ENCODE measurements at regions of chr19 and their contacts with region 1.

Region 1: GRCh38 chr19:39480337-39481228 is at the start of gene TIMM50:
- DNase-seq: peak; percentile 93 to 98 (median 95)
- ATAC-seq: peak; percentile 100
- H3K4me3 ChIP-seq: peak within 1 kb of the TSS; percentile 74
- H3K4me3 Mint-ChIP-seq: peak within 1 kb of the TSS; percentile 86 to 97 (median 92)
- H3K27ac ChIP-seq: peak within 1 kb of the TSS; percentile 86
- H3K27ac Mint-ChIP-seq: peak within 1 kb of the TSS; percentile 80 to 97 (median 93)
- H3K4me1 ChIP-seq: peaks cover 10 to 11% of the 10 kb centered on the region in 2 donors
- H3K4me1 Mint-ChIP-seq: peaks cover 14 to 32% (median 25%) of the 10 kb centered on the region in 7 donors
- H3K27me3 ChIP-seq: no peaks in the 10 kb centered on the region
- H3K27me3 Mint-ChIP-seq: no peaks in the 10 kb centered on the region
- total RNA-seq, gene TIMM50: 43.5 to 70.0 (median 50.0) TPM

Region 2: GRCh38 chr19:39502640-39503417 is 22.2 kb after region 1 on chr19:
- CTCF ChIA-PET with region 1: no interaction called
- POLR2A ChIA-PET with region 1: no interaction called
- intact Hi-C with region 1: loop called in 1 of 2 experiments (anchors 2 kb)
- DNase-seq: peak; percentile 67 to 88 (median 78)
- ATAC-seq: peak; percentile 94
- H3K4me3 ChIP-seq: no peak overlapping the region
- H3K4me3 Mint-ChIP-seq: peak overlapping the region in 5 of 10 donors; percentile 4 to 48 (median 16)
- H3K27ac ChIP-seq: no peak overlapping the region
- H3K27ac Mint-ChIP-seq: peak overlapping the region in 3 of 9 donors; percentile 48 to 71 (median 66)
- H3K4me1 ChIP-seq: peaks cover 11 to 21% of the 10 kb centered on the region in 2 donors
- H3K4me1 Mint-ChIP-seq: peaks cover 26 to 38% (median 35%) of the 10 kb centered on the region in 7 donors
- H3K27me3 ChIP-seq: peaks cover 12 to 19% of the 10 kb centered on the region in 2 donors
- H3K27me3 Mint-ChIP-seq: peaks cover 55 to 73% (median 62%) of the 10 kb centered on the region in 5 donors

Region 3: GRCh38 chr19:39833464-39834286 is 353.1 kb after region 1 on chr19 and contains the start of gene DYRK1B:
- CTCF ChIA-PET with region 1: no interaction called
- POLR2A ChIA-PET with region 1: no interaction called
- intact Hi-C with region 1: loop called in 1 of 2 experiments (anchors 1 kb)
- DNase-seq: peak; percentile 90 to 99 (median 98)
- ATAC-seq: peak; percentile 92
- H3K4me3 ChIP-seq: peak within 1 kb of the TSS; percentile 100
- H3K4me3 Mint-ChIP-seq: peak within 1 kb of the TSS; percentile 60 to 88 (median 81)
- H3K27ac ChIP-seq: peak within 1 kb of the TSS; percentile 96
- H3K27ac Mint-ChIP-seq: peak within 1 kb of the TSS; percentile 85 to 96 (median 92)
- H3K4me1 ChIP-seq: peaks cover 17 to 23% of the 10 kb centered on the region in 2 donors
- H3K4me1 Mint-ChIP-seq: peaks cover 19 to 37% (median 27%) of the 10 kb centered on the region in 7 donors
- H3K27me3 ChIP-seq: no peaks in the 10 kb centered on the region
- H3K27me3 Mint-ChIP-seq: no peaks in the 10 kb centered on the region
- total RNA-seq, gene DYRK1B: 12.3 to 38.9 (median 23.5) TPM